Gastrocnemius medialis (tissue), 4 donors: ENCODE measurements at regions of chr4 and their contacts with region 1.

Region 1: DNA sequence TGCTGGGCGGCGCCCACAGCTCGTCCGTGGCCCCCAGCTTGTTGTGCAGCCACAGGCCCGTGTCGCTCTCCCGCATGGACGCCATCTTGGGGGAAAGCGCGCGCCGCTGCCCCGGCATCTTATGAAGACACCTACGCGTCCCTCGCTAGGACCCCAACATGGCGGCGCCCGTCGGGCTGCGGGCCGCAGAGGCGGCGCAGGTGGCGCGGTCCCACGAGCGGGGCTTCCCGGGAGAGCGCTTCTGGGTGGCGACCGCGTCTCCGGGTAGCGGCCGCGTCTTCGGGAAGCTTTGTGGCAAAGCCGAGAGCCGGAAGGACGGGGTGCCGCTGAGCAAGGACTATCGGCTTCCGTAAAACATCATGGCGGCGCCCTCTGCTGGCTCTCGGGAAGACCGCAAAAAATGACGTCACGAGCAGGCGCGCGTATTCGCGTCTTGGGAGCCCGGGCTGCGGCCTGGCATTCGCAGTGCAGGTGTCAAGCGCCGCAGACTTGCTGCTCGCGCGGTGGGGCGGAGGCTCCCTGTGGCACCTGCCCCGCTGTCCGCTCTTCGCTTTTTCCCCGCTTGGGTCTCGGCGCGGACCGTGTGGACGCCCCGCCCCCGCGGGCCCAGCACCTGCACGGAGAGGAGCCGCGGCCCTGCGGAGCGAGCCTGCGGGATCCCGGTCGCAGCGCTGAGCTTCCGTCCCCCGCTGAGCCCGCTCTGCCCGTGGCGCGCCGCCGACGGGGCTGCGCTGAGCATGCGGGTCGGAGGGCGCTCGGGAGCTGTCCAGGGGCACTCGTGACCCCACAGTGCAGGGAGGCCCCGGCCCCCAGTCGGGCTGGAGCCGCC is at the start of gene NELFA:
- DNase-seq: peak; percentile 93
- ATAC-seq: peak; percentile 92 to 93
- H3K4me3 ChIP-seq: peak within 1 kb of the TSS; percentile 68 to 99 (median 90)
- H3K27ac ChIP-seq: peak within 1 kb of the TSS; percentile 93 to 100 (median 98)
- H3K4me1 ChIP-seq: peaks cover 18 to 23% of the 10 kb centered on the region in 2 donors
- H3K27me3 ChIP-seq: no peaks in the 10 kb centered on the region
- CTCF ChIP-seq: peak; percentile 15 to 79 (median 42)
- POLR2A ChIP-seq: peak; percentile 86 to 92
- total RNA-seq, gene NELFA: 8.1 to 21.1 (median 15.9) TPM

Region 2: DNA sequence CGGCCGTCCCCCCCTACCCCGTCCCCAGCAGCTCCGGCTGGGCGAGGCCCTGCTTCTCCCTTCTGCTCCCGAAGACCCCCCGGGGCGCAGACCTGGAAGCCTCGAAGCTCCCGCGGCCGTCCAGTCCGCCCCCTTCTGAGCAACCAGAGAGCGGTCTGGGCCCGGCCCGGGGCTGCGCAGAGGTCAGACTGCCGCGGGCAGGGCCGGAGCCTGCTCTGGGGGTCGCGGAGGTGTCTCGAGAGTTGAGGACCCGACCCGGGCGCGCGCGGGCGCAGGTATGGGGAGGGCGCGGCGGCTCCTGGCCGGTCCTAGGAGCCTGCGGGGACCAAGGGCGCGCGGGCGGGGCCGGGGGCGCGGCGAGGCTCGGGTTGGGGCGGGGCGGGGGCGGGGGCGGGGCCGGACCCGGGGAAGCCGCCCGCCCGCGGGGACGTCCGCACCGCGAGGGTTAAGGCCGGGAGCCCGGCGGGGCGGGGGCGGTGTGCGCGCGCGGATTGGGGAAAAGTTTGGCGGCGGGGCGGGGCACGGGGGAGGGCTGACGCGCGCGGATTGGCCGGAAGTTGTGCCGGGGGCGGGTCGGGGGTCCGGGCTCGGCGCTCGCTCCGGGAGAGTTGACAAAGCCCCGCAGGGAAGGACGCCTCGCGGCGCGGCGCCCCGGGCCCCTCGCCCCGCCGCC is 997.9 kb before region 1 on chr4 and contains the start of gene FGFRL1:
- in situ Hi-C with region 1: no loop called
- intact Hi-C with region 1: loop called (anchors 10 kb)
- DNase-seq: peak; percentile 87 to 88
- ATAC-seq: peak; percentile 62 to 63
- H3K4me3 ChIP-seq: peak within 1 kb of the TSS; percentile 63 to 97 (median 74)
- H3K27ac ChIP-seq: peak within 1 kb of the TSS; percentile 50 to 64 (median 62)
- H3K4me1 ChIP-seq: peaks cover 7 to 19% of the 10 kb centered on the region in 2 donors
- H3K27me3 ChIP-seq: peaks cover 19 to 23% (median 20%) of the 10 kb centered on the region in 3 donors
- CTCF ChIP-seq: no peak
- POLR2A ChIP-seq: peak in 1 of 2 donors; percentile 10
- total RNA-seq, gene FGFRL1: 10.4 to 32.4 (median 15.2) TPM

Region 3: DNA sequence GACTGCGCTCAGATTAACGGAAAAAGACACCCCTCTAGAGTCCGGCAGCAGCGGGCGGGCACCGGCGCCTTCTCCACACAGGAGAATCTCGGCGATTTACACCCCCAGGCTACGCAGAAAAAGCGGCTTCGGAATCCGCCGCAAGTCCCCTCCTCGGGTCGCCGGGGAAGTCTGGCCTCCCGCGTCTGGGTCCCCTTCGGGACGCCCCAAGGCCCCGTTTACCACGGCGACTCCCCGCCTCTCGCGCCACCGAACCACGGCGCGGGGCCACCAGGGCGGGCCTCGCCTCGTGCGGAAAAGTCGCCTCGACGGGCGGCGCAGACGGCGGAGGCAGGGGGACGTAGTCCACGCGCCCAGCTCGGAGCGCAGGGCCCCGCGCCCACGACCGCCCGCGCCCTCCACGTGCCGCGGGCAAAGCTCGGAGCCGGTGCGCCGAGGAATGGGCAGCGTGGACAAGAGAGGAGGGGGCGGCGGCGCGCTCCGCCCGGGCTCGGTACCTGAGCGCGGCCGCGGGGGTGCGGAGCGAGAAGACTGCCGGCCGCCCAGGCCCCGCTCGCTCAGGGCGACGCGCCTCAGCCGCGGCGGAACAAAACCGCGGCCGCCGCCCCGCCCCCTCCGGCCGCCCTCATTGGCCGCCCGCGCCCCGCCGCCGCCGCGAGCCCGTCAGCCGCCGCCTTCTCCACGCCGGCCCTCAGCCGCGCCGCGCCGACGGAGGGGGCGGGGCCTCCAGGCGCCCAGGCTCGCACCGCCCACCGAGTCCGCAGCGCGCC is 325.2 kb before region 1 on chr4 and contains the start of gene FAM53A:
- in situ Hi-C with region 1: no loop called
- intact Hi-C with region 1: loop called (anchors 10 kb)
- DNase-seq: peak in 1 of 2 donors; percentile 79
- ATAC-seq: peak; percentile 85 to 86
- H3K4me3 ChIP-seq: peak within 1 kb of the TSS; percentile 62 to 85 (median 71)
- H3K27ac ChIP-seq: peak within 1 kb of the TSS; percentile 68 to 86 (median 80)
- H3K4me1 ChIP-seq: peaks cover 0 to 11% of the 10 kb centered on the region in 2 donors
- H3K27me3 ChIP-seq: no peaks in the 10 kb centered on the region
- CTCF ChIP-seq: peak in 4 of 5 experiments; percentile 17 to 39 (median 26)
- POLR2A ChIP-seq: peak; percentile 64 to 68
- total RNA-seq, gene FAM53A: 1.8 to 5.2 (median 2.8) TPM

Region 4: DNA sequence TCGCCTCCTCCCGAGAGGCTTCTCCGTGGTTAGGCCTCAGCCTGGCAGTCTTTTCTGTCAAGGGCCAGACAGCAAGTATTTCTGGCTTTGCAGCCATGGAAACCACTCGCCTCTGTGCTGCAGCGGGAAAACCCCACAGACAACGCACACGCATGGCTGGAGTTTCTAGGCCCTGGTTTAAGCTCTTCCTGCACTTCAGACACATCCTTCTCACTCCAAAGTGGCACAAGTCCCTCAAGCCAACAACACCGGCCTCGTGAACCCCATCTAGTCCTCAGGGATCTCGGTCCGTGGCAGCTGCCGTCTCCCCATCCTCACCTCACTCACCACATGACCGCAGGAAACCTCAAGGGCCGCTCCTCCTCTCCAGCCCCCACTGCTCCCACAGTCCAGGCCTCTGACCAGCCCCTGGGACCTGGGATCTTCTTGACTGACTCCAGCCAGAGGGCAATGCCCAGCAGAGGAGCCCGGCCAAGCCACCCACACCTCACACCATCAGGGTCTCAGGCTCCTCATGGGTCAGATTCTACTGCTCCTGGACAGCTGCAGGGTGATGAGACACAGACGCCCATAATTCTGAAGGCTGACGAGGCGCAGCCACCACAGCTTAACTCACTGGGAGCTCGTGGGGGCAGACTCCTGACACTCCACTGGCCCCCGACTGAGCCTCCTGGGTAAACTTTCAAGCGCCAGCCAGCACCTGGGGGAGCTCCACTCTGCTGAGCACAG is 174.9 kb before region 1 on chr4:
- in situ Hi-C with region 1: no loop called
- intact Hi-C with region 1: no loop called
- DNase-seq: no peak
- ATAC-seq: no peak
- H3K4me3 ChIP-seq: no peak overlapping the region
- H3K27ac ChIP-seq: no peak overlapping the region
- H3K4me1 ChIP-seq: no peaks in the 10 kb centered on the region
- H3K27me3 ChIP-seq: no peaks in the 10 kb centered on the region
- CTCF ChIP-seq: no peak
- POLR2A ChIP-seq: no peak

Region 5: GRCh38 chr4:1870578-1871443 is 138.3 kb before region 1 on chr4 and contains the start of gene NSD2:
- in situ Hi-C with region 1: no loop called
- intact Hi-C with region 1: loop called (anchors 2 kb)
- DNase-seq: peak; percentile 78 to 79
- ATAC-seq: peak; percentile 84
- H3K4me3 ChIP-seq: peak within 1 kb of the TSS; percentile 68 to 91 (median 84)
- H3K27ac ChIP-seq: peak within 1 kb of the TSS; percentile 87 to 96 (median 91)
- H3K4me1 ChIP-seq: peaks cover 16 to 23% of the 10 kb centered on the region in 2 donors
- H3K27me3 ChIP-seq: peaks cover 2 to 9% (median 6%) of the 10 kb centered on the region in 3 donors
- CTCF ChIP-seq: peak in 1 of 5 experiments; percentile 12
- POLR2A ChIP-seq: peak; percentile 69 to 73
- total RNA-seq, gene NSD2: 14.8 to 21.3 (median 16.8) TPM

Region 6: GRCh38 chr4:1948892-1949436 is 60.1 kb before region 1 on chr4:
- in situ Hi-C with region 1: no loop called
- intact Hi-C with region 1: no loop called
- DNase-seq: no peak
- ATAC-seq: no peak
- H3K4me3 ChIP-seq: no peak overlapping the region
- H3K27ac ChIP-seq: no peak overlapping the region
- H3K4me1 ChIP-seq: no peaks in the 10 kb centered on the region
- H3K27me3 ChIP-seq: no peaks in the 10 kb centered on the region
- CTCF ChIP-seq: no peak
- POLR2A ChIP-seq: no peak

Region 7: GRCh38 chr4:2045518-2045951 is 36.4 kb after region 1 on chr4:
- in situ Hi-C with region 1: no loop called
- intact Hi-C with region 1: loop called (anchors 1 kb)
- DNase-seq: peak; percentile 26 to 64
- ATAC-seq: peak; percentile 69 to 87
- H3K4me3 ChIP-seq: no peak overlapping the region
- H3K27ac ChIP-seq: peak overlapping the region in 3 of 4 donors; percentile 47 to 64 (median 51)
- H3K4me1 ChIP-seq: peaks cover 0 to 13% of the 10 kb centered on the region in 2 donors
- H3K27me3 ChIP-seq: peaks cover 18 to 43% (median 33%) of the 10 kb centered on the region in 3 donors
- CTCF ChIP-seq: no peak
- POLR2A ChIP-seq: no peak

Region 8: DNA sequence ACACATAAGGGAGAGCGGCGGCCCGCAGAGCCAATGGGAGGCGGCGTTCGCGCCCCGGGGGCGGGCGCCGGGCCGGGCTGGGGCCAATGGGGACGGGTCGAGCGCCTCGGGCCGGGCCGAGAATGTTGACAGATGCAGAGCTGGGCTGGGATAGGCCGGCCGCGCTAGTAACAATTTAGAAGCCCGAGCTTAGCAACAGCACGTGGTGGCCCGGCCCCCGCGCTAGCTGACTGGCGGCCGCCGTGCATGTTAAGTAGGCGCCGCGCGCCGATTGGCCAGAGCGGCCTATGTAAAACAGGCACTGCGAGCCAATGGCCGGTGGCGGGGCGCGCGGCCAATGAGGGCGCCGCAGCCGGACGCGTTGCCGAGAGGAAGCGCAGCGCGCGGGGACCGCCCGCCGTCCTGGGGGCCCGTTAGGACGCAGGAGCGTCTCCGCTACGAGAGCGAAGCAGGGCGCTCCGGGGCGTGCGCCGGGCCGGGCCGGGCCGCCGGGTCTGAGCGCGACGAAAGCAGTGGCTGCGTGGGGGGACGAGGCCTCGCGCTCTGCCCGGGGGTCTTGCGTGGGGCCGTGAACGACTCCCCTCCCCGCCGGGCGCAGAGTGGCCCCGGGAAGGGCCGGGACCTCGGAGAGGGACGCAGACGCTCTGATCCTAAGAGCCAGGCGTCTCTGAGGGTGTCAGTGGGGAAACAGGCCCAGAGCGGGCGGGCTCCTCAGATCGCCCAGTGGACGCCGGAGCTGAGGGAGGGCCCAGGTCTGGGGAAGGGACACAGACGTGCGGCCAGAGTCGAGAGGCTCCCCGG is 253.3 kb after region 1 on chr4:
- in situ Hi-C with region 1: no loop called
- intact Hi-C with region 1: loop called (anchors 5 kb)
- DNase-seq: peak; percentile 99 to 100
- ATAC-seq: peak; percentile 81 to 82
- H3K4me3 ChIP-seq: peak overlapping the region; percentile 56 to 91 (median 76)
- H3K27ac ChIP-seq: peak overlapping the region; percentile 93 to 99 (median 96)
- H3K4me1 ChIP-seq: peaks cover 55 to 77% of the 10 kb centered on the region in 2 donors
- H3K27me3 ChIP-seq: no peaks in the 10 kb centered on the region
- CTCF ChIP-seq: no peak
- POLR2A ChIP-seq: peak; percentile 91 to 98

Region 9: DNA sequence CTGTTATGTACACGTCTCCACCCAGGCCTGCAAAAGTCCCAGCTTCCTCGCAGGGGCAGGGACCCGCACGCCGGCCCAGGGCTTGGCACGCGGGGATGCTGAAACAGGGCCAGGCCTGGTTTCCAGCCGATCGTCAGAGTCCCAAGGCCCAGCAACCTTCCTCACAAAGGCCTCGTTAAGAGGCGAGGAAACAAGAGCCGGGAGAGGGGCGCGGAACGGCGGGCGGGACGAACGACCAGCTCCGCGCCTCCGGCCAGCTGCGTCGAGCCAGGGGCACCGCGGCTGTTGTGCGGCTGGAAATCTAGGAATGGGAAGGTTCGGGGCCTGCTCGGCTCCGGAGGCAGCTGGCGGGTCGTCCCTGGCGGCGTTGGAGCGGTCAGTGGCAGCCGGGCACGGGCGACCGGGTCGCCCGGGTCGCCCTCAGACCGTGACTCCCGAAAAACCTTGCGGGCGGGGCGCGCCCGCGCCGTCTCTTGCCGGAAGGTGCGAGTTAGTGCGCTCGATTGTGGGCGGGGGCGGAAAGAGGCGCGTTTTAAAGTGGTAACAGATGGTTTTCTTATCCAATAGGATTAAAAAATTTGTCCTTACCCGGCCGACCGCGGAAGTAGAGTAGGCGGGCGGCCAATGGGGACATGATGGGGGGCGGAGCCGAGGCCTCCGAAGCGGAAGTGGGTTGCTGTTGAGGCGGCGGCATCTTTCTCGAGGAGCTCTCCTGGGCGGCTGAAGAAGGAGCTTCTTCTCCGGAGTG is 459.5 kb after region 1 on chr4 and contains the start of gene RNF4:
- in situ Hi-C with region 1: no loop called
- intact Hi-C with region 1: loop called (anchors 10 kb)
- DNase-seq: peak; percentile 94 to 97
- ATAC-seq: peak; percentile 98
- H3K4me3 ChIP-seq: peak within 1 kb of the TSS; percentile 81 to 89 (median 88)
- H3K27ac ChIP-seq: peak within 1 kb of the TSS; percentile 88 to 98 (median 94)
- H3K4me1 ChIP-seq: peaks cover 26 to 27% of the 10 kb centered on the region in 2 donors
- H3K27me3 ChIP-seq: no peaks in the 10 kb centered on the region
- CTCF ChIP-seq: no peak
- POLR2A ChIP-seq: peak; percentile 75 to 81
- total RNA-seq, gene RNF4: 21.7 to 48.7 (median 34.7) TPM